Activated T-helper 1 cell treated with anti-CD3 and anti-CD28 coated beads, Interleukin-12 subunit alpha, Interleukin-12 subunit beta, Interleukin-2, Interleukin-4 antibody, amounts not matched to agents 30 ng/mL and 10 ng/mL and 1 ng/mL, durations not matched to agents 14 hours and 24 hours and 36 hours (primary cell): ENCODE measurements at regions of chr2 and their contacts with region 1.

Region 1: DNA sequence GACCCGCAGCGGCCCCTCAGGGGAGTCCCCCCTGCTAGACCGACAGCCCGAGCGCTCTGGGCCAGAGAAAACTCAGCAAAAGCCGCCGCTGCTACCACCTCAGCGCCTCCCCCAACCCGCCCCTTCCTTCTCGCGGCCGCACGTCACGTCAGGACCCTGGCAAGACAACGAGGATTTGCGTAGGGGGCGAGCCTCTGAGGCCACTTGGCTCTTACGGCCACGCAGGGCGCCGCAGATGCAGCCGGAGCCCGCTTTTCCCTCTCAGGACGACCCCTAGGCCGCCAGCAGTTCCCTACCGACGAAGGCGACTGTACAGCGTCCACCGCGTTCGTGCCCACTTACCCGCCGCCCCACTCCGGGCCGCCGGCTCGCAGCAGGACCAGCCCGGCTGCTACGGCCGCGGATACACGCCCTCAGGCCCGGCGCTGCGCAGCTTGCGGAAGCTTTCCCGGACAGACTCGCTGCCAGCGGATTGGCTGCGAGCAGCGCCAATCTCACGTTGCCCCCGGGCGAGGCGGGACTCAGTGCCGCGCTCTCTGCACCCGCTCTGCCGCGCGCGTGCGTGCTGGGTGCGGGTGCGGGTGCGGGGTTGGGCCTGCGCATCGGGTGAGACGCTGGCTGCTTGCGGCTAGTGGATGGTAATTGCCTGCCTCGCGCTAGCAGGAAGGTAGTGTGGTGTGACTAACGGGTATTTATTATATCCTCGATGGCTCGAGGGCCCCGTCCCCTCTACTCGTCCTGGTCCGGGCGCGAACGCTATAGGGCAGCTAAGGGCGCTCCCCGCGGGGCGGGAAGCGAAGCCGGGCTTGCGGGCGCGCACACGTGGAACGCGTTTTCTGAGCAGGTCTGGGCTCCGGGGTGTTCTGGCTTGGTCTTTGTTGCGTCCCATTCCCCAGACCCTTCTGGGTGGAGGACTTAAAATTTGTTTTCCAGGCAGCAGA is at the starts of genes ORMDL1 and PMS1:
- DNase-seq: peak; percentile 94
- H3K4me3 Mint-ChIP-seq: peak within 1 kb of the TSS; percentile 92
- H3K27ac Mint-ChIP-seq: peak within 1 kb of the TSS; percentile 93
- H3K4me1 Mint-ChIP-seq: peaks cover 40% of the 10 kb centered on the region
- H3K27me3 Mint-ChIP-seq: no peaks in the 10 kb centered on the region
- total RNA-seq, gene ORMDL1: 78.7 and 80.1 TPM in 2 replicates
- total RNA-seq, gene PMS1: 54.4 and 55.9 TPM in 2 replicates

Region 2: GRCh38 chr2:189580658-189581353 is 203.4 kb before region 1 on chr2 and contains the start of gene SLC40A1:
- intact Hi-C with region 1: loop called (anchors 2 kb)
- DNase-seq: peak; percentile 58
- H3K4me3 Mint-ChIP-seq: peak within 1 kb of the TSS; percentile 84
- H3K27ac Mint-ChIP-seq: no peak within 1 kb of the TSS
- H3K4me1 Mint-ChIP-seq: peaks cover 15% of the 10 kb centered on the region
- H3K27me3 Mint-ChIP-seq: peaks cover 40% of the 10 kb centered on the region
- total RNA-seq, gene SLC40A1: 0.86 and 1.2 TPM in 2 replicates

Region 3: GRCh38 chr2:189674374-189675112 is 109.7 kb before region 1 on chr2 and contains the start of gene ANKAR:
- intact Hi-C with region 1: loop called (anchors 1 kb)
- DNase-seq: peak; percentile 71
- H3K4me3 Mint-ChIP-seq: peak within 1 kb of the TSS; percentile 88
- H3K27ac Mint-ChIP-seq: peak within 1 kb of the TSS; percentile 91
- H3K4me1 Mint-ChIP-seq: peaks cover 23% of the 10 kb centered on the region
- H3K27me3 Mint-ChIP-seq: no peaks in the 10 kb centered on the region
- total RNA-seq, gene ANKAR: 4.2 and 5.8 TPM in 2 replicates

Region 4: GRCh38 chr2:189762551-189763298 is 21.5 kb before region 1 on chr2 and contains the start of gene OSGEPL1:
- intact Hi-C with region 1: loop called (anchors 1 kb)
- DNase-seq: peak; percentile 88
- H3K4me3 Mint-ChIP-seq: peak within 1 kb of the TSS; percentile 92
- H3K27ac Mint-ChIP-seq: peak within 1 kb of the TSS; percentile 99
- H3K4me1 Mint-ChIP-seq: peaks cover 14% of the 10 kb centered on the region
- H3K27me3 Mint-ChIP-seq: no peaks in the 10 kb centered on the region
- total RNA-seq, gene OSGEPL1: 8.3 and 11.4 TPM in 2 replicates

Region 5: DNA sequence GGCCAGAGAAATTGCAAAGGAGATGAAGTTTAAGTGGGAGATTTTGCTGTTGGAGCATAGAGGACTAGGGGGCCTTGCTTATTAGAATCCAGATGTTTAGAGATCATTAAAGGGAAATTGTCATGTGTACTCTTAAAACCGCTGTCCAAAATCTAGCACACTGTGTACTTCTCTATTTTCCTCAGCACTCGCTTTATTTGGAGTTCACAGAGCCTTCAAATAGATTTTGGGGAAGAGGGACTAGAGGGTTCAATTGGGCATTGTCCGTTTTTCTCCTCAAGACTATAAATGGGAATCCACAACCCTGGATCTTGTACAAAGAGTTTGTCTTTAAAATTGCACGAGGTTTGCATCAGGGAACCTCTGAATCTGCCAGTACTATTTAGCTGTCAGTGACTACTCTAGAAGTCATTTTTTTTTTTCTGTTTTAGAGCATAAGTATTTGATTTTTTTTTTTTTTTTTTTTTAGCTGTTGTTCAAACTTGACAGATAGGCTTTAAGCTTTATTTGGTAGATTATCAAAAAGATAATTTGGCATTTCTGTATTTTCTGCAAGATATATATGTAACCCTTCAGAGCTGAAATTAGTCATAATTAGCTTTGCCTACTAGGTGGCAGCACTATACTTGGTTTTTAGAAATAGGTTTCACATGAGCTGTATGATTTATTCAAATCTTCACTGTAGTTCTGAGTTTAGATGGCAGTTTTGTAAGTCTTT is 14.3 kb after region 1 on chr2:
- intact Hi-C with region 1: loop called (anchors 1 kb)
- DNase-seq: no peak
- H3K4me3 Mint-ChIP-seq: no peak overlapping the region
- H3K27ac Mint-ChIP-seq: no peak overlapping the region
- H3K4me1 Mint-ChIP-seq: no peaks in the 10 kb centered on the region
- H3K27me3 Mint-ChIP-seq: no peaks in the 10 kb centered on the region

Region 6: DNA sequence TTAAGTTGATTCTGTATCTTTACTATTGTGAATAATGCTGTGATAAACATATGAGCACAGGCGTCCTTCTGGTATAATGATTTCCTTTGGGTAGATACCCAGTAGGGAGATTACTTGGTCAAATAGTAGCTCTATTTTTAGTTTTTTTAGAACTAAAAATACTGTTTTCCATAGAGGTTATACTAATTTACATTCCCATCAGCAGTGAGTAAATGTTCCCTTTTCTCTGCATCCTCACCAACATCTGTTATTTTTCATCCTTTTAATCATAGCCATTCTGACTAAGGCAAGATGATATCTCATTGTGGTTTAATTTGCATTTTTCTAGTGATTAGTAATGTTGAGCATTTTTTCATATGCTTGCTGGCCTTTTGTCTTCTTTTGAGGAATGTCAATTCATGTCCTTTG is 35.1 kb after region 1 on chr2:
- intact Hi-C with region 1: loop called (anchors 1 kb)
- DNase-seq: no peak
- H3K4me3 Mint-ChIP-seq: no peak overlapping the region
- H3K27ac Mint-ChIP-seq: peak overlapping the region; percentile 29
- H3K4me1 Mint-ChIP-seq: peaks cover 16% of the 10 kb centered on the region
- H3K27me3 Mint-ChIP-seq: no peaks in the 10 kb centered on the region